Aorta (tissue), 5 donors: ENCODE measurements at regions of chr2 and their contacts with region 1.

Region 1: GRCh38 chr2:147989809-147990403 is 30.6 kb downstream of the ORC4 start:
- DNase-seq: no peak
- ATAC-seq: peak; percentile 74
- H3K4me3 ChIP-seq: no peak overlapping the region
- H3K27ac ChIP-seq: no peak overlapping the region
- H3K4me1 ChIP-seq: peaks cover 0 to 2% of the 10 kb centered on the region in 2 donors
- H3K27me3 ChIP-seq: no peaks in the 10 kb centered on the region

Region 2: DNA sequence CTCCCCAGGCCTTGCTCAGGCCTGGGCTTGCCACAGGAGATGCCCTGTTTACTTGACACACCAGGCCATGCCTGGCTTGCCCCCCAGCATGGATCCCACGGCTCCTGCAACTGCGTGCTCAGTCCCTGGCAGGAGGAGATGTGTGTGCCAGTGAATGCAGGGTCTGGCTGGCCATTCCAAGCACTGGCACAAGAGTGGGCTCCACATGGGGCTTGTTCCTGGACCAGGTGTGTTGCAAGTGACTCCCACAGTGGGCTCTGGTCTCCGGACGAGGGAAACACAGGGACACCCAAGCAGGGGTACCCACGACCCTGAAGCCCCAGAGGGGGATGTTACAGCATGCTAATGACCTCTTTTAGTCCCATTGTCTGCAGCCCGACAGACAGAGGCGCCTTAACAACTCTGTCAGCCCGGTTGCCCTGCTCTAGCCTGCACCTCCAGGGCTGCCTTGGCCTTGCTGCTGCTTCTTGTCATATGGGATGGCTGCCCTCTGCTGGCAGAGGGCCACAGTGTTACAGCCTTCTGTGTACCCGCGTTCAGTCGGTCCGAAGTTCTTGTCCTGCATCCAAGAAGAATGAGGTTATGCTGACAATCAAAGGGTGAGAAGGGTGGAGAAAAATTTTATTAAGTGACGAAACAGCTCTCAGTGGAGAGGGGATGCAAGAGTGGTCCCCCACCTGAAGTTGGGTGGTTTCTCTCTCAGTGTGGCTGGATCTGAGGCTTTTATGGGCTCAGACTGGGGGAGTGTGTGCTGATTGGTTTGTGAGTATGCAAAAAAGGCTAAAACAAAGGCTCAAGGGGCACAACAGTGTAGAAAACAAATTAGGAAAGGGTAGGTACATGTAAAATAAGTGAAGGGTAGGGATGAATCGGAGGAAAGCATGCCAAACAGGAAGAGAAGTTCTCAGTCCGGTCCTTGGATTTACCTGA is 211.4 kb after region 1 on chr2:
- intact Hi-C with region 1: loop called in 1 of 2 experiments (anchors 5 kb)
- DNase-seq: peak; percentile 51 to 75
- ATAC-seq: no peak
- H3K4me3 ChIP-seq: no peak overlapping the region
- H3K27ac ChIP-seq: no peak overlapping the region
- H3K4me1 ChIP-seq: no peaks in the 10 kb centered on the region
- H3K27me3 ChIP-seq: no peaks in the 10 kb centered on the region